Head of caudate nucleus (tissue), 42 donors: ENCODE measurements at regions of chr11 and their contacts with region 1.

Region 1: GRCh38 chr11:2420502-2421225 is 20.1 kb downstream of the TSSC4 start:
- DNase-seq: peak; percentile 32 to 89 (median 80)

Region 2: DNA sequence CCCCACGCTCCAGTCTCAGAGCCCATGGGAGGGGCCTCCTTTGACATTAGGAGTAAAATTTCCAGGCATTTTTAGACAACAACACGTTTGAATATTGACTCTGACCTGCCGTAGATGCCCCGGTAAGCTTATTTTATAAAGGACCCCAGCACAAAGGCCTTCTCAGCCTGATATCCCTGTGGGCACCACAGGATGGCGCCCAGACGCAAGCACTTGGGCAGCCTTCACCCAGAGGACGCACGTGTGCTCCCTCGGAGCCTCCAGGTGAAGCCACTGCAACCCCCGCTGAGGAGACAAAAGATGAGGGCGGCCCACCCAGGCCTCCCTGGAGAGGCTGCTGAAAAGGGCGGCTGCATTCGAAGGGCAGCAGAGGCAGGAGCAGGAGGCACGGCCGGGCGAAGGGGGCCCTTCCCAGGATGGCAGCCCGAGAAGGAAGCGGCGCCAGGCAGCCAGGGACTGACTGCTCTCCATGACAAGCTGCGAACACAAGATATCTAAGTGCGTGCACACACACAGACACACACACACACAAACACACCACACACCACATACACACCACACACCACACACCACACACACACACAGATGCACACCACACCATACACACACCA is 233.9 kb before region 1 on chr11:
- intact Hi-C with region 1: loop called (anchors 5 kb)
- DNase-seq: peak in 4 of 42 donors; percentile 19 to 31 (median 26)